ENCODE measurements at regions of chr19 and their contacts with region 1.

Region 1: DNA sequence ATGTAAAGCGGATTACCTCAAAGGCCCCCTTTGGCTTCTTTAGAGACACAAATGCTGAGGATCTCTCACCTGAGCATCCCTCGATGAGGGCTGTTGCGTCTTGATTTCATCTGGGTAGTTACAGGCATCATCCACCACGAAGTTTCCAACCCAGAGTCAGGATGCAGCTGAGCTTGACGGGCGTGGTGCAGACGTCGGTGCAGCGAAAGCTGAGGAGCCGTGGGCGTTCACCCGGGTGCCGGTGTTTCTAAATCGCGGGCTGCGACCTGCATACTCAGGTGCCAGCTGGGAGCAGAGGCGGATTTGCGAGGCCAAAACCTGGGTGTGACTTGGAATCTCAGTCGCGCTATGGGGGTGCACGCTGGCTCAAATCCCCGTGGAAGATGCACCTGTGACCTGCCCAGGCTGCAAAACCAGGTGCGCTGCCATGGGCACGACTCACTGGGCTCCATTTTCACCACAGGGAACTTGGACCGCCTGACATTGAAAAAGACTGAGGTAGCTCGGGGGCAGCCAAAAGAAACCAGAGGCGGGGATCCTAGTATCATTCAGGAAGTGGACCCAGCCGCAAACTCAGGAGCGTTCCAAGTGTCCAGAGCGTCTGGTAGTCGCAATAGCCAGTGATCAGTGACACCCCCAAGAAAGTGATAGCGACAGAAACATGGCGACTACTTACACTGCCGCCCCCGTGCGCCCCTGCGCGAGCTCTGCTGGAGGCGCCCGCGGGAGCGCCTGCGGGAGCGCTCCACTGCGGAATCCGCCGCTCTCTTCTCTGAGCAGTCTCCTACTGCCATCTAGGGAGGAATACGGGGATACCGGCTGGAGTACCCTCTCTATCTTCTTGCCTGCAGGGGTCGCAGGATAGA is 36.4 kb upstream of the IGFL4 start:
- DNase-seq: peak; percentile 90 to 95
- ATAC-seq: peak; percentile 94 to 95
- H3K4me3 ChIP-seq: peak overlapping the region; percentile 59
- H3K27ac ChIP-seq: peak overlapping the region; percentile 72 to 86
- H3K4me1 ChIP-seq: peaks cover 45% of the 10 kb centered on the region
- CTCF ChIP-seq: peak; percentile 100
- EP300 ChIP-seq: no peak
- POLR2A ChIP-seq: no peak
- RAD21 ChIP-seq: peak; percentile 99 to 100

Region 2: DNA sequence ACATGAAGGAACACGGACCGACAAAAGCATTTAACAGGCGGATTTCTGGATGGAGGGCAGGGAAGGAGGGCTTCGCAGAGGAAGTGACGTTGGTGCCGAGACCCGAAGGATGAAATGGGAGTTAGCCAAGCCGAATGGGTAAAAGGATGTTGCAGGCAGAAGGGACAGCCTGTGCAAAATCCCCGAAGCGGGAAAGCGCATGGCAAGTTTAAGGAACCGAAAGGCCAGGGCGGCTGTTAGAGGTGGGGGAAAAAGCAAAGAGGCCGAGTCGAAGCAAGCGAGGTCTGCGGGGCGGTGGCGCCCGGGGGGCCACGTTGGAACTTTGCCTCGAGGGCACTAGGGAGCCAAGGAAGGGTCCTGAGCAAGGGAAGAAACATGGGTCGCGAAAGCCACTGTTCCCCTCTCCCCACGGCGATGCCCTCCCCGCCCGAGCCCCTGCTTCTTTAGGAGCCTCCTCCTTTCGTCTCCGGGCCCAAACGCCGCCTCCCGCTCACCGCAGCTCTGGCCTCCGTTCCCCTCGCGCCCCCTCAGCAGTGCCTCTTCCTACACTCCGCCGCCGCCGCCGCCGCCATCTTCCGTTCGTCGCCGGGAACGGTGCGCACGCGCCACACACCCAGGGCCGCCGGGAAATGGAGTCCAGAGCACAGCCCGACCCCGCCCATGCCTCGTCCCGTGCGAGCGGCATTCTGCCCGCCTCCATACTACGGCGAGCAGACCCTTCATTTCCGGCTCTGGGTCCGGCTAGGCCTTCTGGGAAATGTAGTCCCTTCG is 214.4 kb before region 1 on chr19 and contains the start of gene SYMPK:
- CTCF ChIA-PET with region 1: interaction called, 21 read pairs
- POLR2A ChIA-PET with region 1: interaction called, 3 read pairs
- DNase-seq: peak; percentile 99 to 100
- ATAC-seq: peak; percentile 92 to 96
- H3K4me3 ChIP-seq: peak within 1 kb of the TSS; percentile 71
- H3K27ac ChIP-seq: peak within 1 kb of the TSS; percentile 88
- H3K4me1 ChIP-seq: peaks cover 25% of the 10 kb centered on the region
- CTCF ChIP-seq: no peak
- EP300 ChIP-seq: no peak; a peak in 1 of 5 replicates
- POLR2A ChIP-seq: peak; percentile 59
- RAD21 ChIP-seq: no peak
- polyA plus RNA-seq, gene SYMPK: 92.6 and 105 TPM in 2 replicates

Region 3: DNA sequence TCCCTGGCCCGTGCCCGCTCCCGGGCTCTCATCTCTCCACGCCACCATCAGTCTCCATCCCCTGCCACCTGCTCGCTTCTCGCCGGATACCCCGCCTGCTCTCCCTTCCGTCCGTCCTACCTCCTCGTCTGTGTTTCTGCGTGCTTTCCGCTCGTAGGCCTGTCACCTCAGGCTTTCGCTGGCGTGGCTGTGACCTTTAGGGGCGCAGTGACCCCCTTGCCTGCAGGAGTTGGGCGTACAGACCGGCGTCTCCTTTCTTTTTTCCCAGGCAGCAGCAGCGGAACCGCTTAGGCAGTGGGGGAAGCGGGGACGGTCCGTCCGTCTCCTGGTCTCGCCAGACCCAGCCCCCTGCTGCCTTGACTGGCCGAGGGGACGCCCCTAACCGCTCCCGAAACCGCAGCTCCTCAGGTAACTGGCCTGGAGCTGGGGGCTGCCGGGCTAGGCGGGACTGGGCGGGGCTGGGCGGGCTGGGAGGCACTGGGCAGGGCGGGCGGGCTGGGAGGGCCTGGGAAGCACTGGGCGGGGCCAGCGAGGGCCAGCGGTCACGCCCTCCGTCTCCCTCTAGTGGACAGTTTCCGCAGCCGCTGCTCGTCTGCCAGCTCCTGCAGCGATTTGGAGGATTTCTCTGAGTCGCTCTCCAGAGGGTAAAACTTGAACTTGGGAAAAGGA is 60.6 kb before region 1 on chr19:
- CTCF ChIA-PET with region 1: interaction called, 1,009 read pairs
- POLR2A ChIA-PET with region 1: interaction called, 4 read pairs
- DNase-seq: peak; percentile 84 to 87
- ATAC-seq: peak; percentile 69 to 85
- H3K4me3 ChIP-seq: peak overlapping the region; percentile 59
- H3K27ac ChIP-seq: peak overlapping the region; percentile 54 to 80; a peak in 5 of 6 replicates
- H3K4me1 ChIP-seq: peaks cover 20% of the 10 kb centered on the region
- CTCF ChIP-seq: peak; percentile 74
- EP300 ChIP-seq: no peak
- POLR2A ChIP-seq: no peak
- RAD21 ChIP-seq: peak; percentile 35 to 61; a peak in 4 of 5 replicates

Region 4: DNA sequence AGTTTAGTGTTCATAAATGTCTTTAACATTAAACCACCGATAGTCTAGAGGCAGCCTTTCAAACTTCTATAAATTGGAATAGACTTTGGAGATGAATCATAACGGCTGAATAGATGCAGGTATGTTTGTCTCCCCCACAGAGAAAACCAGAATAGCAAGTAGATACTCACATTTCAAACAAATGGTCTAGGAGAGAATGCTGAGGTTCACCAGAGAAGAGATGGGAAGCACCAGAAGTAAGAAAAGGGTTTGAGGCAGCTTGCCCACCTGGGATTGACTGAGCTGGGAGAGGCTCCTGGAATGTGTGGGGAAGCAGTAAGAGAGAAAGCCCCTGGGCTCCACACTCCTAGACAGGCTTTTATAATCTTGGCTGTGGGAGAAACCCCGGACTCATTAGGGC is 41.0 kb after region 1 on chr19:
- CTCF ChIA-PET with region 1: interaction called, 12 read pairs
- POLR2A ChIA-PET with region 1: no interaction called
- DNase-seq: no peak
- ATAC-seq: no peak; a peak in 1 of 6 replicates
- H3K4me3 ChIP-seq: no peak overlapping the region
- H3K27ac ChIP-seq: peak overlapping the region in 1 of 2 experiments; percentile 1; a peak in 1 of 6 replicates
- H3K4me1 ChIP-seq: peaks cover 13% of the 10 kb centered on the region
- CTCF ChIP-seq: no peak
- EP300 ChIP-seq: no peak
- POLR2A ChIP-seq: no peak
- RAD21 ChIP-seq: no peak

Region 5: DNA sequence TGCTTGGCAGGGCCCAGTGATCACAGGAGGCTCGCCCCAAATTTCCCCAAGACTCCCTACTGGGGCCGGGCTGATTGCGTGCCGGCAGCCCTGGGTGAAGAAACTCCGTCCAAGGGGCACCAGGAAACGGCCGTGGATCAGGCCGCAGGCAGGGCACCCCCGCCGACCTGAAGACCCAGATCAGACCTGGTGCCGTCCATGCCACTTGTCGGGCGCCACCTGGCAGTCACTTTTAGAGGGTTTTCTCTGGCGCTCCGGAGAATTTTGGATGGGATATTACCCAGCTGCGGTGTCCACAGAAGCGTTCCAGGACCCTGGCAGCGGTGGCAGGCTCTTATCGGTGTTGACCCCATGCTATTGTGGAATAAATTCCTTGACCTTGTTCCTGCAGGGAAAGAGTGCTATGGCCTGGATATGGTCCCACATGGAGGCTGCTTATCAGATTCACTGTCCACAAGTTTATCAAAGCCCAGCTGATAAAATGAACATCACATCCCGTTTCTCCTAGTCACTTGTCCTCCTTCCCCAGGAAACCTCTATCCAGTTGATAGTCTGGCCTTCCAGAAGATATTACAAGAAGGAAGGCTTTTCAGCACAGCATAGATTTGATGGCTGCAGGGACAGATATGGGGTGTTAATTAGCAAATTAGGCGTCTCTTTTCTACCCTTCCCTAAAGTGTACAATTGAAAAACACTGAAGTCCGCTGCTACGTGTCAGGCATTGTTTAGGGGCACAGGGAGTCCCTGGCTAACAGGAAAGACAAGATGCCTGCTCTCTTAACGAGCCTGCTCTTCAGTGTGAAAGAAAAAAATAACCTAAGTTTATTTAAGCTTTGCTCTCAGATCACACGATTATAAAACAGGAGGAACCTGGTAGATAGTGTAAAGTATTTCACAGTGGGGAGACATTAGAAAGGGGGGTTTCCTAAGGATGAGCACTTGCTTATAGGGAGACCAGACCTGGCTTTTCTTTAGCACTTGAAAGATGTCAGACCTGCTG is 109.2 kb after region 1 on chr19:
- CTCF ChIA-PET with region 1: interaction called, 390 read pairs
- POLR2A ChIA-PET with region 1: interaction called, 3 read pairs
- DNase-seq: no peak
- ATAC-seq: no peak
- H3K4me3 ChIP-seq: no peak overlapping the region
- H3K27ac ChIP-seq: peak overlapping the region in 1 of 2 experiments; percentile 65; a peak in 2 of 6 replicates
- H3K4me1 ChIP-seq: peaks cover 42% of the 10 kb centered on the region
- CTCF ChIP-seq: no peak
- EP300 ChIP-seq: no peak
- POLR2A ChIP-seq: no peak
- RAD21 ChIP-seq: no peak

Region 6: DNA sequence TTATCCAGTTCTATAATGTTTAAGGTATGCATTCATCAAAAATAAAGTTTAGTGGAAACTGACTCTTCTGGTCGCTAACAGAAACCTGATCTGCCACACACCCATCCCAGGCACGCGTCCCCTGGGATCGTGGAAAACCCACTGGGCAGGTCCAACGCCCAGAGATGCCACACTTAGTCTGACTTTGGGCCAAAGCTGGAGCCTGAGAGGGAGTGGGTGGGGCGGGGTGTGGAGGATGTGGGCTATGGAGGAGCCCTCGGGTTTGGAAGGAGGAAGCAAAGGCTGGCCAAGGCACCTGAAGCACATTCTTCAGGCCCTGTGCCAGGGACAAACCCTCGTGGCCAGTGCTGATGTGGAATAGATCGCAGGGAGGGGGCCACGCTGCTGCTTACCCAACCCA is 154.8 kb after region 1 on chr19:
- CTCF ChIA-PET with region 1: interaction called, 13 read pairs
- POLR2A ChIA-PET with region 1: no interaction called
- DNase-seq: no peak
- ATAC-seq: no peak
- H3K4me3 ChIP-seq: no peak overlapping the region
- H3K27ac ChIP-seq: no peak overlapping the region
- H3K4me1 ChIP-seq: peaks cover 4% of the 10 kb centered on the region
- CTCF ChIP-seq: no peak
- EP300 ChIP-seq: no peak
- POLR2A ChIP-seq: no peak
- RAD21 ChIP-seq: no peak

Region 7: DNA sequence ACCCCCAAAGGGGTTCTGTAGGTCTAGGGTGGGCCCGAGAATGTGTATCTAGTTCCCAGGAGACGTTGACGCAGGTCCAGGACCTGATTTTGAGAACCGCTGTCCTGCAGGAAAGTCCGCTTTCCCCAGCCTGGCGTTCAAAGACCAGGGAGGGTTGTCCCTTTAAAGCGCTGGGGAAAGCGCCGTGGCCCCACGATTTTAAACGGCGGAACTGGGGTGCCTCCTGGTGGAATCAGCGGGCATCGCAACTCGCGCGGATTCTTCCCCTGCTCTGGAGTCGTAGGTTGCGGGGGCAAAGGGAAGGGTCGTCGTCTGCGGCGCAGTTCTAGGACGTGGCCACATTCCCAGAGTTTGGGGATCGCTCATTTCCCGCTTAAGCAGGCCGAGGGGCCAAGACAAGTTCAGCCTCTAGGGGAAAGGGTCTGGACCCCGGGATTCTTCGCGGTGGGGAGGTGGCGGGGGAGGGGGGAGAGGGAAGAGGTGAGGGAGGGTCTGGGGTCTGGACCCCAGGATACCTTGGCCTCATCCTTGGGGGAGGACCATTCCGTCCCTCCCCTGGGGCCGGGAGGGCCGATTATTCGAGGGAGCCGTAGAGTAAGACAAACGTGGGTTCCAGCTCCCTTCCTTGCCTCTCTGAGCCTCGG is 410.7 kb after region 1 on chr19:
- CTCF ChIA-PET with region 1: interaction called, 16 read pairs
- POLR2A ChIA-PET with region 1: no interaction called
- DNase-seq: peak; percentile 71 to 86
- ATAC-seq: peak; percentile 75 to 93
- H3K4me3 ChIP-seq: peak overlapping the region; percentile 46
- H3K27ac ChIP-seq: peak overlapping the region; percentile 65 to 72; a peak in 5 of 6 replicates
- H3K4me1 ChIP-seq: peaks cover 10% of the 10 kb centered on the region; the same call in 1 of the 3 replicates
- CTCF ChIP-seq: peak; percentile 98
- EP300 ChIP-seq: no peak
- POLR2A ChIP-seq: no peak
- RAD21 ChIP-seq: peak; percentile 99 to 100

Measured in A549 (cell line).